ENCODE measurements at regions of chr7 and their contacts with region 1.

Region 1: DNA sequence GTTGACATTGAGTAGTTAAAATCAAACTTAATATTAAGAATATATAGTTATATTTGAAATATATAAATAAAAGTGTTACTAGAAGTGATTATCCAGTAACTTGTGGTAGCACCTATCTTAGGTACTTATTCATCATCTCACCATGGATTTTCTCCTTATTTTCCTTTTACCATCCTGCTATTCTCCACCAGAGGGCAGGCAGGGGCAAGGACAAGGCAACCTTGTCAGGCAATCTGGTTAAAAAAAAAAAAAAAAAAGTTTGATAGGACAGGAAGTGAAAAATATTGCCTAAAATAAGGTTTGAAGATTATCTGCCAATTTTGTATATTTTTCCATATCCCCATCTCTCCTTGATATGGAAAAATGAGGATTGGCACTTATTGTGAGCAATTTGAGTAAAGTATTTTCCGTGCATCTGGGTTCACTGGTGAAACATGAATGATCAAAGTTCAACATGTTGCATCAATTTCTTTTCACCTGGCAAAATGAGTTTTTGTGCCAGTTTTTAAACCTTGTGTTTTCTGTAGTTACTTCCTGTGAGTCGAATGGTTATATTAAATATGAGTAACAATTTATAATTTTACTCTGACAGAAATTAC is 256.7 kb downstream of the AGMO start:
- DNase-seq: no peak
- H3K4me3 ChIP-seq: no peak overlapping the region
- H3K27ac ChIP-seq: no peak overlapping the region
- H3K4me1 ChIP-seq: no peaks in the 10 kb centered on the region
- H3K27me3 ChIP-seq: no peaks in the 10 kb centered on the region
- CTCF ChIP-seq: peak; percentile 22 to 64 (median 42)
- POLR2A ChIP-seq: no peak

Region 2: DNA sequence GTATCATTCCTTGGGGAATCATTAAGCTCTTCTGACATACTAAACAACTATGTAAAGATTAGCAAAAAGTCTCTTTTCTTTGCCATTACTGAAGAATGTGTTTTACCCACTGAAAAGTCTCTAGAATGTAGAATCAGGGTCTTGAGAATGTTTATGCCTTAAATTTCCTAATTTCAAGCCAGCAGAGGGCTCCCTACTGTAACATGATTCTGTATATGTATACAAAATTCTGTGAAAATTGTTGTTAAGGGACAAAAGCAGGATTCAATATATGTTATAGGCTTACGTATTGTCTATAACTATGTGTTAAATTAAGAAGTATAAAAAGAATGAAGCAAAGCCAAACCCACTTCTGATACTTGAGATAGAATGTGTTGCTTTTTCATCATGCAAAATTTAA is 105.6 kb before region 1 on chr7:
- intact Hi-C with region 1: no loop called
- DNase-seq: no peak
- H3K4me3 ChIP-seq: no peak overlapping the region
- H3K27ac ChIP-seq: no peak overlapping the region
- H3K4me1 ChIP-seq: no peaks in the 10 kb centered on the region
- H3K27me3 ChIP-seq: no peaks in the 10 kb centered on the region
- CTCF ChIP-seq: no peak
- POLR2A ChIP-seq: no peak

Region 3: GRCh38 chr7:15461576-15461975 is 156.5 kb after region 1 on chr7:
- intact Hi-C with region 1: no loop called
- DNase-seq: no peak
- H3K4me3 ChIP-seq: no peak overlapping the region
- H3K27ac ChIP-seq: no peak overlapping the region
- H3K4me1 ChIP-seq: no peaks in the 10 kb centered on the region
- H3K27me3 ChIP-seq: peaks cover 0 to 5% (median 0%) of the 10 kb centered on the region in 4 donors
- CTCF ChIP-seq: no peak
- POLR2A ChIP-seq: no peak

Region 4: DNA sequence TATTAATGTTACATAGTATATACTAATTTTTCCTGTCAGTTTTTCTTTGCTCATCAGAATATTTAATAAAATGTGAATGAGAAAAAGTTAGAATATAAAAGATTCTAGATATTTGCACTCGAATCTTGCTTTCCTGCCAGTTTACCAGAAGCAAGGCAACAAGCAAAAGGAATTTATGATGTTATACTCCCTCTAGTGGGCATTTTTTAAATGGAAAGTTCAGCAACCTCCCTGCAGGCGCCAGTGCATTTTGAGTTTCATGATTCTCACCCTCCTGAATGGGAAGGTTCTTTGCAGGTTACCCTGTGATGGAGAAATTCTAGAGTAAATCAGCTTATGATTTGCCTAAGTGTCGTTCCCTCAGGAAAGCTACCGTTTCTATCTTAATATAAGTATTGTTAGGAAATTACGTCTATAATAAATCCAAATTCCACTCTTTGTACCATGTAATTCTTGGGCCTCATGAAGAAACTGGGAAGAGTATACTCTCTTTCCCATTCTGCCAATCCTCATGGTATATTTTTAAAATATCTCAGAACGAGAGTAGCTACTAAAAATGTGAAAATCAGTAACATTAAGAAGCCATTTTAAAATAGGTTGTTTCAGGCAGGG is 766.3 kb after region 1 on chr7:
- intact Hi-C with region 1: loop called (anchors 10 kb)
- DNase-seq: no peak
- H3K4me3 ChIP-seq: no peak overlapping the region
- H3K27ac ChIP-seq: no peak overlapping the region
- H3K4me1 ChIP-seq: peaks cover 0 to 4% (median 0%) of the 10 kb centered on the region in 3 donors
- H3K27me3 ChIP-seq: no peaks in the 10 kb centered on the region
- CTCF ChIP-seq: peak; percentile 23 to 82 (median 77)
- POLR2A ChIP-seq: no peak